Aorta (tissue), 5 donors: ENCODE measurements at regions of chr15 and their contacts with region 1.

Region 1: GRCh38 chr15:88061452-88061851 is 195.1 kb downstream of the NTRK3 start:
- DNase-seq: no peak
- ATAC-seq: peak; percentile 45
- H3K4me3 ChIP-seq: no peak overlapping the region
- H3K27ac ChIP-seq: no peak overlapping the region
- H3K4me1 ChIP-seq: no peaks in the 10 kb centered on the region
- H3K27me3 ChIP-seq: no peaks in the 10 kb centered on the region

Region 2: DNA sequence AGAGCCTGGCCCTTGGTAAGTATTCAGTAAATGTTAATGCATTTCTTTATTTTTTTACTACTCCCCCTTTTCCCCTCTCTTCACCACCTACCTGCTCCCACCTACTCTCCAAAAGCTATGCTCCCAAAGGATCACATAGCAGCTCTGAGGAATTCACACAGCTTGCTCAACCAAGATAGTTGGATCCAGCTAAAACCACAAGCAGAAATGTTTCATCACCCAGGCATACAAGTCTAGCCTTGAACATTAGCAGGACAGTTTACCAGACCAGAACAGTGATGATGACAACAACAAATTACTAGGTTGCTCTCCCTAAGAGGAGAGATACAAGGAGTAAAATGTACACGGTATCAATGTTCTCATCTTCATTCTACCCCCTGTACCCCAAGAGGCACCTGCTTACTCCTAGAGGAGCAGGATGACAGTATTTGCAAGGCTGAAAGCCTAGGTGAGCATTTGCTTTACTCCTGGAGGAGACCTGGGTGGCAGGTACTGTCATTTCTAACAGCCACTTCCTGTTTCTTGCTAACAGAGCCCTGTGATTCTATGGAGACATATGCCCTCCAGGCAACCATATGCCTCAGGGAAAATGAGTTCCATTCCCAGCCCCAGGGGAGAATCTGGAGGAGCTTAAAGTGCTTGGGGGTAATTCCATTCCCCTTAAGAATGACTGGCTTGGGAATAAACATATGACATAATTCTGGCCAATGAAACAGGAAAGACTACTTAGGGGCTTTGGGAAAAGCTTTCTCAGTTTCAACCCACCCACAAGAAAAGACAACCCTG is 42.4 kb before region 1 on chr15:
- intact Hi-C with region 1: loop called in 1 of 2 experiments (anchors 5 kb)
- DNase-seq: no peak
- ATAC-seq: no peak
- H3K4me3 ChIP-seq: no peak overlapping the region
- H3K27ac ChIP-seq: no peak overlapping the region
- H3K4me1 ChIP-seq: peaks cover 3% of the 10 kb centered on the region in 2 donors
- H3K27me3 ChIP-seq: no peaks in the 10 kb centered on the region

Region 3: GRCh38 chr15:88108991-88109390 is 47.5 kb after region 1 on chr15:
- intact Hi-C with region 1: no loop called
- DNase-seq: no peak
- ATAC-seq: no peak
- H3K4me3 ChIP-seq: no peak overlapping the region
- H3K27ac ChIP-seq: no peak overlapping the region
- H3K4me1 ChIP-seq: peaks cover 0 to 3% of the 10 kb centered on the region in 2 donors
- H3K27me3 ChIP-seq: no peaks in the 10 kb centered on the region